Right ventricle myocardium inferior (tissue), 1 donor: ENCODE measurements at regions of chr14 and their contacts with region 1.

Region 1: DNA sequence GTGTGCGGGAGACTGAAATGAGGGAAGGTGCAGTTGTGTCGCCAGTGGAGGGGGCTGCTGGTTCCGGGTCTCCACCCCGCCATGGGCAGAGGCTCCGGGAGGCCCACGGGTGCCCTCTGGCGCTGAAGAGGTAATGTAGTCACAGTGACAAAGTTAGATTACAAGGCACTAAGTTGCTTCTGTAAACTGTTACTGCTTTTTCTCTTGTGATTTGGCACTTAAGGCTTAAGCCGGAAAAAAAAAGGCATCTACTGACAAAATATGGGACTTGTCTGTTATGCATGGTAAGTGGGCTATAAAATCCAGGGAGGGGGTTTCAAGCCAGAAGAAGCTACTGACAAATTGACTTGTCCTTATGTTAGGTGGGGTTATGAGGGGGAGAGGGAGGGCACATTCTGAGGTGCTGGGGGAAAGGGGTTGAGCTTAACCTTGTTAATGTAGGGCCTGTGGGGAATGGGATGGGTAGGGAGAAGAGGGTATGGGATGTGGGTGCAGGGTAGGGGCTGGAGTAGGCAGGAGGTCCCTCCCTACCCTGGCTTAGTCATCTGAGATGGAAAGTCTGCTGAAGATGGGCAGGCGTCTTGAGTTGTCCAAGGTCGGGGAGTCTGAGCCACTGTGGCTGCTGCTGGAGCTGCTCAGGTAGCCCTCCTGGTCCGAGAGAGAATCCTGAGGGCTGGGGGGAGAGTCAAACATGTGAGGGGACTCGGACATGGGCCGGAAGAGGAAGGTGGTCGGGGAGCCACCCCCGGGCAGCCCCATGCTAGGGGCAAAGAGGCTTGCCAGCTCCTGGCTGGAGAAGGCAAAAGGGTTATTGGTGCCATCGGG is 3.7 kb downstream of the ZFP36L1 start:
- DNase-seq: peak; percentile 92
- ATAC-seq: peak; percentile 24

Region 2: GRCh38 chr14:68523989-68524725 is 265.1 kb before region 1 on chr14:
- intact Hi-C with region 1: loop called (anchors 1 kb)
- DNase-seq: no peak
- ATAC-seq: peak; percentile 40

Region 3: GRCh38 chr14:68727315-68728047 is 61.7 kb before region 1 on chr14:
- intact Hi-C with region 1: loop called (anchors 2 kb)
- DNase-seq: no peak
- ATAC-seq: no peak